ENCODE measurements at regions of chr18 and their contacts with region 1.

Region 1: DNA sequence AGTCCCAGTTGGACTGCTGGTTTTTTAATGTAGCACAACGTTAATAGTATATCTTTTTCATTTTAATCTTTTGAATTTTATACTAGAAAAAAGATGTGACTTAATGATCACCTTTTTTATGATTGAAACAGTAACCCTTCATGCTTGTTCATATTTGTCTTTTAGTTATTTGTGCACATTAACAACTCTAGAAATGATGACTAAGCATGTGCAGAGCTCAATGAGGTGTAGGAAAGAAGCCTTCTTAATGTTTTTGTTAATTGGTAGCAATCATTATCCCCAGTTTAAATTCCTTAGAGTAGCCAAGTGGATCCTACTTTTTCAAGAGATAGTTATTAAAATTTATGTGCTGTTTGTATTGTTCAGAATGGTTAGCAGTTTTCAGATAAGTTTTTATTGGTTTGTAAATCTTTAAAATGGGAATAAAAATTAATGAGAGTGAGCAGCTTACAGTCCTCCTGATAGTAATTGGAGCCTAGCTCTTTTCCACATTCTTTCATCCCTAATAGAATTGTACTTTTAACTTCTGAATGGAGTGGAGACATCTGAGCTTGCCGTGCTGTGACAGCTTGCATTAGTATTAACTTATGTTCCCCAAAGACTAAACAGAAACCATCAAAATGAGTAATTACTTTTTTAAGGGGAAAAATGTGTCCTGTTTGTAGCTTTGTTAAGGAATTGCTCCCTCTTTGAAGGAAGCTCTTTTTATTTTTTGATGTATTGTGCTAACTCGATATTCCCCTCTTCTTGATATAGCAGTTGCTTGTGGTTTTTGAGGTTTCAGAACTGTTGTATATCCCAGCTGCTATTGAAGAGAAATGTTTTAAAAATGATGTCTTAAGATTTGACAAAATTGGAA is 17.3 kb downstream of the PIK3C3 start:
- DNase-seq: no peak
- CTCF ChIP-seq: no peak

Region 2: DNA sequence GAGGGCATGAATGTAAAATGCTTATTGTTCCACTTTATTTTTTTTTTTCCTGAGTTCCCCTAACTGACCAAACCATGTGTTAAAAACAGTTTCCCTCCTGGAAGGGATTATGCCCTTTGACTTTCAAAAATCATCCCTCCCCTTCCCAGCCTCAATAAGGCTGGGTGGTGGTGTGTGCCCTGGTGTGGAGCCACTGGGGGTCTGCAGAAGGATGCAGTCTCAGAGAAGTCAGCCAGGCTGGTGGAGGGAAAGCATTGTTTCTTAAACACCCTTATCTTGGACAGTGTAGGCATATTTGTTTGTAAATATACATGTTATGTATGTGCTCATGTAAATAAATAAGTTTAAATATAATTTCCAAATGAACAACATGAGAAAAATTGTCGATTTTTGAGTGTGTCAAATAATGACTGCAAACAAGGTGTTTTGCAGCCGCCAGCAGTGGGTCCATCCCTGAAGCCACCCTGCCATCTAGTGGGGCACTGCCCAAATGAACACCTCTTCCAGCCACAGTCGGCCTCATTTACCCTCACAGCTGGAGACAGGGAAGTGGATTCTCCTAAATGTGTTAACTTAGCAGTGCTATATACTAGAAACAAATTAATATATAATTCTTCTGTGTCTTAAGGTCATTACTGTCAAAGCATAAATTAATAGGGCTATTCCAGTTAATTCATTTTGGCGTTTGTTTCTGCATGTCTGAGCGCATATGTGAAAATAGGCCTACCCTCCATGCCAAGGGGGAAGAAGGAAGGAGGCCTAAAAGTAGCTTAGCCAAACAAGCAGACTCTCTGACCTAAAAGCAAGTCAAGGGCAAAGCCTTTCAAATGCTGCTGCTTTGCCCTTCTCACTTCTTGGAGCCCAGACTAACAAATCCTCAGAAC is 226.9 kb before region 1 on chr18:
- CTCF ChIA-PET with region 1: no interaction called
- POLR2A ChIA-PET with region 1: no interaction called
- DNase-seq: peak; percentile 29
- CTCF ChIP-seq: peak; percentile 38

Region 3: DNA sequence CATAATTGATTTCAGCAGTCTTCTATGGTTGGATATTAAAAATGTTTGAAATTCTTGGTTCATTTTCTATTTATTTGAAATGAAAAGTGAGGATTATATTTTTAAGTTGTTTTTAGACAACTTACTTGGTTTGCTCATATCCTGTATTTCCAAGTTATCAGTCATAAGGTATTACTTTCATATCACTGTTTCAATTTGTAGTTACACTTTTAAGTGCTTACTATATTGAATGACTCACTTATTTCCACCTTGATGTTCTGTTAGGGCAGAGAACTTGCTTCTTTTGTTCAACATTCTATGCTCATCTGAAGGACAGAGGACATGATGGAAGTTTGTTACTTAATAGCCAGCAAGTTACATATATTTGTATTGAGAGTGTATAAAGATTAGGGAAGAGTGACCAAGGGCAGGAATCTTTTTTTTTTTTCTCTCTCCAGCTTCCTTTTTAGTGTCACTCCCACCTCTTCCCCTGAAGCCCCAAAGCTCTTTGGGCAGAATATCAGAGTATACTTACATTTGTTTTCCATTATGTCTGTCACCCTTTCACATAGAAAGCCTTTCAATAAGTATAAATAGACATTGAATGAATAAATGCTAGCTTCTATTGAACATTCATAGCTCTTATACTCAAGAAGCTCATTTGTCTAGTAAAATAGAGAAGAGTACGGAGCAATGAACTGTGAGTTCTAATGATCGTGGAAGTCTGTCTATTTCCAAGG is 10.8 kb after region 1 on chr18:
- CTCF ChIA-PET with region 1: interaction called, 12 read pairs
- POLR2A ChIA-PET with region 1: interaction called, 8 read pairs
- DNase-seq: peak; percentile 14
- CTCF ChIP-seq: no peak